ENCODE measurements at regions of chr22 and their contacts with region 1.

Region 1: GRCh38 chr22:42369245-42370041 is 62.8 kb downstream of the NFAM1 start:
- DNase-seq: peak in 1 of 2 experiments; percentile 78
- H3K4me3 ChIP-seq: peak overlapping the region; percentile 75 to 97 (median 83)
- H3K27ac ChIP-seq: no peak overlapping the region
- H3K4me1 ChIP-seq: peaks cover 18 to 47% (median 28%) of the 10 kb centered on the region in 4 experiments
- H3K27me3 ChIP-seq: peaks cover 0 to 2% (median 0%) of the 10 kb centered on the region in 4 experiments; a peak in 2 of 7 replicates
- CTCF ChIP-seq: no peak
- EP300 ChIP-seq: peak in 1 of 2 experiments; percentile 42; a peak in 1 of 3 replicates
- POLR2A ChIP-seq: 0 out of 3 replicates have a peak, but pooled peaks of 1 of the 2 experiments have one; percentile 59
- RAD21 ChIP-seq: no peak

Region 2: GRCh38 chr22:42353883-42354727 is 15.3 kb before region 1 on chr22:
- CTCF ChIA-PET with region 1: interaction called, 8 read pairs
- POLR2A ChIA-PET with region 1: interaction called, 11 read pairs
- DNase-seq: no peak
- H3K4me3 ChIP-seq: no peak overlapping the region
- H3K27ac ChIP-seq: no peak overlapping the region
- H3K4me1 ChIP-seq: peaks cover 3 to 14% (median 9%) of the 10 kb centered on the region in 4 experiments
- H3K27me3 ChIP-seq: no peaks in the 10 kb centered on the region; a peak in 2 of 7 replicates
- CTCF ChIP-seq: peak in 2 of 3 experiments; percentile 19 to 30; a peak in 3 of 4 replicates
- EP300 ChIP-seq: 0 out of 3 replicates have a peak, but pooled peaks of 1 of the 2 experiments have one; percentile 24
- POLR2A ChIP-seq: no peak
- RAD21 ChIP-seq: peak in 1 of 2 experiments; percentile 34; a peak in 2 of 4 replicates

Region 3: GRCh38 chr22:42432020-42432596 is 62.7 kb after region 1 on chr22 and contains the start of gene NFAM1:
- CTCF ChIA-PET with region 1: interaction called, 10 read pairs
- POLR2A ChIA-PET with region 1: interaction called, 5 read pairs
- DNase-seq: no peak
- H3K4me3 ChIP-seq: peak within 1 kb of the TSS in 1 of 4 experiments; percentile 37; a peak in 1 of 8 replicates
- H3K27ac ChIP-seq: no peak within 1 kb of the TSS
- H3K4me1 ChIP-seq: peaks cover 6 to 18% (median 15%) of the 10 kb centered on the region in 4 experiments
- H3K27me3 ChIP-seq: peaks cover 0 to 5% (median 3%) of the 10 kb centered on the region in 4 experiments; a peak in 3 of 7 replicates
- CTCF ChIP-seq: no peak
- EP300 ChIP-seq: no peak
- POLR2A ChIP-seq: no peak
- RAD21 ChIP-seq: no peak
- total RNA-seq, gene NFAM1: 0.61 and 0.73 TPM in 2 replicates

Measured in H1 (cell line).